Mammary epithelial cell (primary cell): ENCODE measurements at regions of chr9 and their contacts with region 1.

Region 1: DNA sequence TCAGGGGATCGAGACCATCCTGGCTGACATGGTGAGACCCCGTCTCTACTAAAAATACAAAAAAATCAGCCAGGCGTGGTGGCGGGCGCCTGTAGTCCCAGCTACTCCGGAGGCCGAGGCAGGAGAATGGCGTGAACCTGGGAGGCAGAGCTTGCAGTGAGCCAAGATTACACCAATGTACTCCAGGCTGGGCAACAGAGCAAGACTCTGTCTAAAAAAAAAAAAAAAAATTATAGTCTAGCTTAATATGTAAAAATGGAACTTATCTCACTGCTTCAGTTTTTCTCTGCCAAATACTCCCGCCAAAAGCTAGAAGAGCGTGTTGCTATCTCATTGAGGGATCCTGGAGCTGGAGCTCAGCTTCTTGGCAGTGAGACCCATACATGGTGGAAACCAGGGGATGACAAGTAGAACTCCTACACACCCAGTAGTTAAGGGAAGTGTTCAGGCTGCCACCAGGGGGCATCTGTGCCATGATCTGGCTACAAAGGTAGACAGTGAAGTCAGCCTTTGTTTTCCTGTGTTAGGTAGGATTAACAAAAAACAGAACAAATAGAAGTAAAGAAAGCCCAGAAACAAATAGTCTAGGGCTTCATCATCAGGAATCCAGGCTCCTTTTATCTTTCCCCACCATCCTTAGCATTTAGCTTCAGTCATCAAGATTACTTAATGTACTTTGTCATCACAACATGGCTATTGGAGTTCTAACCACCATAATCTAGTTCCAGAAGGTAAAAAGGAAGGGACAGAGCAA is 33.6 kb upstream of the GLIPR2 start:
- DNase-seq: peak; percentile 66
- H3K4me3 ChIP-seq: no peak overlapping the region
- H3K27ac ChIP-seq: no peak overlapping the region
- H3K4me1 ChIP-seq: peaks cover 10% of the 10 kb centered on the region
- H3K27me3 ChIP-seq: no peaks in the 10 kb centered on the region
- CTCF ChIP-seq: peak; percentile 82

Region 2: GRCh38 chr9:36036780-36037548 is 66.0 kb before region 1 on chr9 and contains the start of gene RECK:
- CTCF ChIA-PET with region 1: no interaction called
- dilution Hi-C with region 1: no loop called
- in situ Hi-C with region 1: no loop called
- intact Hi-C with region 1: loop called (anchors 5 kb)
- DNase-seq: peak; percentile 84
- H3K4me3 ChIP-seq: peak within 1 kb of the TSS; percentile 84 to 90 (median 86)
- H3K27ac ChIP-seq: peak within 1 kb of the TSS; percentile 56
- H3K4me1 ChIP-seq: peaks cover 45% of the 10 kb centered on the region
- H3K27me3 ChIP-seq: no peaks in the 10 kb centered on the region
- CTCF ChIP-seq: no peak
- total RNA-seq, gene RECK: 5.6 to 12.7 TPM

Region 3: DNA sequence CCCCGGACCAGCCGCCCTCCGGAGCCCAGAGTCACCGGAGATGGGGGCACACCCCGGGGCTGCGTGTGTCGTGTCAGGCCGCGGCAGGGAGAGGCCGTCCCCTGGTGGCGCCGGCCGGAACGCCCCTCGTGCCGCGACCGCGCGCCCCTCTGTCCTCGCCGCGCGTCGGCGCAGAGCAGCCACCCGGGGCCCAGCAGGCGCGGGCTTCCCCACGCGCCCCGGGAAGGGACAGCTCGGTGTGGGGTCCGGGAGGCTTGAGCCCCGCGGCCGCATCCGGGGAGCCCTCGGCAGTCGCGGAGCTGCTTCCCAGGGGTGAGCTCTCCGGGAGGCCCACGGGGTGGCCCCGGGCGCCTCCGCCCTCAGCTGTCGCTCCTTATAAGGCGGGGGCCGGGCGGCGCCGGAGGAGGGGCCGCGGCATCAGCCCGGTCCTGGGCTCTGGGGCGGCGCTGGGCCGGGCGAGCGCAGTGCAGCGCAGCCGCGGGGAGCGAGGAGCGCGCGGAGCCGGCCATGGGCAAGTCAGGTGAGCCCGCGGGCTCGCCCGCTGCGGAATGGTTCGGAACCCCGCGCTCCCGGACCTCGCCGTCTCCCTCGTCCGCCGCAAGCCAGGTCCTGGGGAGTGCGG is 33.5 kb after region 1 on chr9 and contains the start of gene GLIPR2:
- CTCF ChIA-PET with region 1: no interaction called
- dilution Hi-C with region 1: no loop called
- in situ Hi-C with region 1: no loop called
- intact Hi-C with region 1: loop called (anchors 2 kb)
- DNase-seq: peak; percentile 66
- H3K4me3 ChIP-seq: peak within 1 kb of the TSS; percentile 43 to 56 (median 53)
- H3K27ac ChIP-seq: no peak within 1 kb of the TSS
- H3K4me1 ChIP-seq: peaks cover 12% of the 10 kb centered on the region
- H3K27me3 ChIP-seq: no peaks in the 10 kb centered on the region
- CTCF ChIP-seq: no peak
- total RNA-seq, gene GLIPR2: 1.2 to 2.1 TPM

Region 4: DNA sequence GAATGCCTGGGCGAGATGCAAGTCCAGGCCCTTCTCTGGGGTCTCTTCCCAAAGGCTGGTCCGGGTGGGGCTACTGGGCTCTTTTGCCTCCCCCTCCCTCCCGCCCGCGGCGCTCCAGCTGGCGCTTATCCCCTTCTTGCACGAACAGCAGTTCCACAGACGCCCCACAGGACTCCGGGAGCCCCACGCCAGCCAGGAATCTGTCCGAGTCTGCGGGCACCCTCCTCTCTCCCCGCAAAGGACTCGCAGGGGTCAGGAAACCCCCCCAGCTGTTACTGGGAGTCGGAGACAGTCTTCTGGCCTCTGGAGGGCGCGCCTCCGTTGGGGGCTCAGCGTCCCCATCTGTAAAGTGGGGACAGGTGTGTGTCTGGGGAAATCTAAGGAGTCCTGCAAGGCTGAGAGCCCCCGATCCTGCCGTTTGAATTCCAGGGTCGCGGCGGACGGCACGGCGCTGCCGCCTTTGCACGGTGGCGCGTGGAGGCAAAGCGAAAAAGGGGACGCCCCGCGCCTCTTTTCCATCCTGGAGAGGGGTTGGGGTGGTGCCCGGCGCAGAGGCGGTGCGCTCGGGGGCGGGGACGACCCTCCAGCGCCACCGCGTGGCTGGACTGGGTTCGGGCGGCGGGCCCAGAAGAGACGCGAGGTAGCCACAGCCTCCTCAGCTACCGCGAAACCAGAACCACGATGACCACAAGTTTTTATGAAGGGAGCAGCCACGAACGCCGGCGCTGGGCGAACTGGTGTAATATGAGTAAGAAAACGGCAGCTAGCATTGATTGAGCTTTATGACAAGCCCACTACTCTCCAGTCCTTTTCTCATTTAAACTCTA is 63.4 kb after region 1 on chr9:
- CTCF ChIA-PET with region 1: no interaction called
- dilution Hi-C with region 1: no loop called
- in situ Hi-C with region 1: no loop called
- intact Hi-C with region 1: loop called (anchors 1 kb)
- DNase-seq: peak; percentile 71
- H3K4me3 ChIP-seq: peak overlapping the region; percentile 18 to 38 (median 25)
- H3K27ac ChIP-seq: no peak overlapping the region
- H3K4me1 ChIP-seq: peaks cover 5% of the 10 kb centered on the region
- H3K27me3 ChIP-seq: no peaks in the 10 kb centered on the region
- CTCF ChIP-seq: peak; percentile 58 to 88

Region 5: DNA sequence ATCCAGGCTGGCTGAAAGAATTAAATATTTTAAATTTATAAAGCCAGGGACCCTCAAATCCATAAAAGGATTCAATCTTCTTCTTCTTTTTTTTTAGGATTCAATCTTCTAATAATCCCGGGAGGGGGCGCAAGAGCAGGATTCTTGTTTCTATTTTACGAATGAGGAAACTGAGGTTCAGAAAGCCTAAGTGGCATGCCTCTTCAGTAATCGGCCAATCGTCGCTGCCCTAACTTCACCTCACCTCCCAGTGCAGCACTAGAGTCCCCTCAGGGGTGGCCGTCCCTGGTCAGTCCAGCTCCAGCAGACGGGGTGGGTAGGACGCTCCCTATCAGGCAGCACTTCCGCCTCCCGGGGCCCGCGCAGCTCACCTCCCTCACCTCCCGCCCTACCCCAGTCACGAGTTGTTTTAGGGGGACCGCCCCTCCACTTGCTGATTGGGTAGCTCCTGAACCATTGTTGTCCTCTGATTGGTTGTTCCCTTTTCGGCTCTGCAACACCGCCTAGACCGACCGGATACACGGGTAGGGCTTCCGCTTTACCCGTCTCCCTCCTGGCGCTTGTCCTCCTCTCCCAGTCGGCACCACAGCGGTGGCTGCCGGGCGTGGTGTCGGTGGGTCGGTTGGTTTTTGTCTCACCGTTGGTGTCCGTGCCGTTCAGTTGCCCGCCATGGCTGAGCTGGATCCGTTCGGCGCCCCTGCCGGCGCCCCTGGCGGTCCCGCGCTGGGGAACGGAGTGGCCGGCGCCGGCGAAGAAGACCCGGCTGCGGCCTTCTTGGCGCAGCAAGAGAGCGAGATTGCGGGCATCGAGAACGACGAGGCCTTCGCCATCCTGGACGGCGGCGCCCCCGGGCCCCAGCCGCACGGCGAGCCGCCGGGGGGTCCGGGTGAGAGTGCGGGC is 87.7 kb after region 1 on chr9 and contains the start of gene CLTA:
- CTCF ChIA-PET with region 1: no interaction called
- dilution Hi-C with region 1: no loop called
- in situ Hi-C with region 1: no loop called
- intact Hi-C with region 1: loop called (anchors 1 kb)
- DNase-seq: peak; percentile 99
- H3K4me3 ChIP-seq: peak within 1 kb of the TSS; percentile 65 to 97 (median 72)
- H3K27ac ChIP-seq: peak within 1 kb of the TSS; percentile 89
- H3K4me1 ChIP-seq: peaks cover 34% of the 10 kb centered on the region
- H3K27me3 ChIP-seq: no peaks in the 10 kb centered on the region
- CTCF ChIP-seq: peak; percentile 43 to 62
- total RNA-seq, gene CLTA: 130 to 217 TPM

Region 6: DNA sequence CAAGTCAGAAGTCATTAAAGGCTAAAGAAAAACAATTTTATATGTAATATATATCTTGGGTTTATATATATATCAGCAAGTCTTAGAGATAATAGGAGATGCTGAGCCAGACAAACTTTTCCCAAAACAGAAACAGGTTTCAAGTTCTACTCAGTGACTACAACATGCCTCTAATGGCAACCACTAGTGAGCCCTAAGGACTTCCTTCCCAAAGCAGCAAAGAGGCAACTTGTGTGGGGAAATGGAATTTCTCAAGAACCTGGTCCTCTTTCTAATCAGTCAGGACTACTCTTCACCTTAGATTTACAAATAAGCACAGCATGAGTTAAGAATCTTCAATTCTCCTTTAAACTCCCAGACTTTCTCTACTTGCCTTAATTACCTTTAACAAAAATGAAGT is 279.6 kb after region 1 on chr9:
- CTCF ChIA-PET with region 1: no interaction called
- dilution Hi-C with region 1: no loop called
- in situ Hi-C with region 1: no loop called
- intact Hi-C with region 1: no loop called
- DNase-seq: no peak
- H3K4me3 ChIP-seq: no peak overlapping the region
- H3K27ac ChIP-seq: no peak overlapping the region
- H3K4me1 ChIP-seq: peaks cover 10% of the 10 kb centered on the region
- H3K27me3 ChIP-seq: no peaks in the 10 kb centered on the region
- CTCF ChIP-seq: no peak